ENCODE measurements at regions of chr21 and their contacts with region 1.

Region 1: DNA sequence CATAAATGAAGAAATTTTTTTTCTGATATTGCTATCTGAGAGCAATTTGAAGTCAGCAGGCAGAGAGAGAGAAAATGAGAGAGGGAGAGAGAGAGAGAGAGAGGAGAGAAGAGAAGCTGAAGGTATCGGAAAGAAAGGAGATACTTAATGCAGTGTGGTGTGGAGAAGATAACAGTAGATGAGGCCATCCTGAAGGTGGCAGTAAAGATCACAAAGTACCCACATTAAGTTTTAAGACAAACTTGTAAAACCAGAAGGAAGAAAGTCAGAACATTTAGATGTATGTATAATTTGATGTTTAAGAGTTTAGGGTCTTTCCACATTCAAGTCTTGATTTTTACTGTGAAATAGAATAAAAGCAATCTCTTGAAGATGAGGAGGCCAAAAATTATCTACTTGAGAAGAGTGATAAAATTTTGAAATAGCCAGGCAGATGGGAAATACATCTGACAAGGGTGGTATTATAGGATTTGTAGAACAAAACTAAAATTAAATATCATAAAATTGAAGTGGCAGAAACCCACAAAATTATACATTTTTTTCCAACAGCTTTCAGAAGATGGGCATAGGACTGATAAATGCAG is 1753.4 kb downstream of the MRPL39 start:
- DNase-seq: peak in 3 of 9 experiments; percentile 6 to 70 (median 56)
- ATAC-seq: peak; percentile 71
- H3K4me3 ChIP-seq: no peak overlapping the region
- H3K4me3 Mint-ChIP-seq: no peak overlapping the region
- H3K27ac ChIP-seq: no peak overlapping the region
- H3K27ac Mint-ChIP-seq: no peak overlapping the region
- H3K4me1 ChIP-seq: peaks cover 3% of the 10 kb centered on the region
- H3K4me1 Mint-ChIP-seq: peaks cover 11% of the 10 kb centered on the region
- H3K27me3 ChIP-seq: no peaks in the 10 kb centered on the region
- H3K27me3 Mint-ChIP-seq: no peaks in the 10 kb centered on the region
- CTCF ChIP-seq: peak; percentile 69

Region 2: GRCh38 chr21:23968722-23969647 is 115.1 kb after region 1 on chr21:
- CTCF ChIA-PET with region 1: interaction called, 39 read pairs
- POLR2A ChIA-PET with region 1: no interaction called
- intact Hi-C with region 1: loop called (anchors 1 to 2 kb)
- DNase-seq: peak; percentile 38 to 92 (median 70)
- ATAC-seq: peak; percentile 89
- H3K4me3 ChIP-seq: peak overlapping the region in 1 of 2 experiments; percentile 1
- H3K4me3 Mint-ChIP-seq: peak overlapping the region; percentile 59
- H3K27ac ChIP-seq: peak overlapping the region; percentile 28 to 66
- H3K27ac Mint-ChIP-seq: peak overlapping the region; percentile 58
- H3K4me1 ChIP-seq: peaks cover 21% of the 10 kb centered on the region
- H3K4me1 Mint-ChIP-seq: peaks cover 20% of the 10 kb centered on the region
- H3K27me3 ChIP-seq: no peaks in the 10 kb centered on the region
- H3K27me3 Mint-ChIP-seq: no peaks in the 10 kb centered on the region
- CTCF ChIP-seq: peak; percentile 79

Region 3: DNA sequence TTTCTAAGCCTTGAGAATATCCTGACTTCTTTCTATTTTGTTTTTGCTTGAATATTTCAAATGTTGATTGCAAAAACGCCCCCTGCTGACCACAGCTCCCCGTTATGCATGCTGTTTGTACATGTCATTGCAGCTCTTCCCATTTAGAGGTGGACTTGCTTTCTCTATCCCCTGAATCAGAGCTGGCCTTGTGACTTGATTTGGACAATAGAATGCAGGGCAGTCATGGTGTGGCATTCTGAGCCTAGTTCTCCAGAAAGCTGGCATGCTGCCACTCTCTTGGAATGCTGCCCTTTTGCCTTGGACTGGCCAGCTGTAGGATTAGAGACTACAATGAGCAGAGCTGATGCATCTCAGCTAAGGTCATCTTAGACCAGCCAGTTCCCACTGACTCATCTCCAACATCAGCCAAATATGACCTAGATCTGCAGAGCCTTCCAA is 191.9 kb after region 1 on chr21:
- CTCF ChIA-PET with region 1: interaction called, 6 read pairs
- POLR2A ChIA-PET with region 1: no interaction called
- intact Hi-C with region 1: loop called in 1 of 2 experiments (anchors 10 kb)
- DNase-seq: peak in 5 of 9 experiments; percentile 11 to 49 (median 19)
- ATAC-seq: no peak
- H3K4me3 ChIP-seq: no peak overlapping the region
- H3K4me3 Mint-ChIP-seq: no peak overlapping the region
- H3K27ac ChIP-seq: no peak overlapping the region
- H3K27ac Mint-ChIP-seq: no peak overlapping the region
- H3K4me1 ChIP-seq: peaks cover 5% of the 10 kb centered on the region
- H3K4me1 Mint-ChIP-seq: peaks cover 17% of the 10 kb centered on the region
- H3K27me3 ChIP-seq: no peaks in the 10 kb centered on the region
- H3K27me3 Mint-ChIP-seq: no peaks in the 10 kb centered on the region
- CTCF ChIP-seq: no peak

Region 4: GRCh38 chr21:24076179-24076578 is 222.3 kb after region 1 on chr21:
- CTCF ChIA-PET with region 1: no interaction called
- POLR2A ChIA-PET with region 1: no interaction called
- intact Hi-C with region 1: loop called in 1 of 2 experiments (anchors 10 kb)
- DNase-seq: peak in 2 of 9 experiments; percentile 7 to 37
- ATAC-seq: no peak
- H3K4me3 ChIP-seq: no peak overlapping the region
- H3K4me3 Mint-ChIP-seq: no peak overlapping the region
- H3K27ac ChIP-seq: no peak overlapping the region
- H3K27ac Mint-ChIP-seq: no peak overlapping the region
- H3K4me1 ChIP-seq: no peaks in the 10 kb centered on the region
- H3K4me1 Mint-ChIP-seq: no peaks in the 10 kb centered on the region
- H3K27me3 ChIP-seq: no peaks in the 10 kb centered on the region
- H3K27me3 Mint-ChIP-seq: no peaks in the 10 kb centered on the region
- CTCF ChIP-seq: no peak

Region 5: DNA sequence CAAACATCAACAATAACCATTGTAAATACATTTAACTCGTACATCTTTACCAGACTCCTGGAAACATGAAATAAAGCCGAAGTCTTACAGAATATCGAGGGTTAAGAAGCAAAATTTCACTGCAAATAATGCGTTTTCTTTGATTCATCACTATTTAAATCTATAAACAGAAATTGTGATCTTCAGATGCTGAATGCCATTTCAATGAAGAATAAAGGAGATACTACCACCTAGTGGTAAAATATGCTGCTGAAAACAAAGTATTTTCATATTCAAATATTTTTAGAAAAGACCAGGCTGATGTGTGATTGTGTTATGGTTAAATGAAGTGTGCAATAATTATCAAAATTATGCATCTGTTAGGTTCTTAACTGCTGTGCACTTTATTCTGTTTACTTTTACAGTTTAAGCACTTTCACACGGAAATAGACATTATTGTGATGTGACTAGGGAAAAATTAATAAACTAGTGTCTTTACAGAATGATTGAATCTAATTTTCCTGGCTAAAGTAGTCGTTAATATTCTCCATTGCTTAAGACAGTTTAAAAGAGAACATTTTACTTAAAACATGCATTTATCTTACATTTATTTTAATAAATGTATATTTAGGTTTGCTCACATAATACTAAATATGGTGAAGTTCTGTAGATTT is 660.3 kb after region 1 on chr21:
- CTCF ChIA-PET with region 1: no interaction called
- POLR2A ChIA-PET with region 1: no interaction called
- intact Hi-C with region 1: loop called in 1 of 2 experiments (anchors 2 kb)
- DNase-seq: peak in 1 of 9 experiments; percentile 17
- ATAC-seq: no peak
- H3K4me3 ChIP-seq: no peak overlapping the region
- H3K4me3 Mint-ChIP-seq: no peak overlapping the region
- H3K27ac ChIP-seq: no peak overlapping the region
- H3K27ac Mint-ChIP-seq: no peak overlapping the region
- H3K4me1 ChIP-seq: no peaks in the 10 kb centered on the region
- H3K4me1 Mint-ChIP-seq: no peaks in the 10 kb centered on the region
- H3K27me3 ChIP-seq: no peaks in the 10 kb centered on the region
- H3K27me3 Mint-ChIP-seq: peaks cover 3% of the 10 kb centered on the region
- CTCF ChIP-seq: peak; percentile 61

Region 6: DNA sequence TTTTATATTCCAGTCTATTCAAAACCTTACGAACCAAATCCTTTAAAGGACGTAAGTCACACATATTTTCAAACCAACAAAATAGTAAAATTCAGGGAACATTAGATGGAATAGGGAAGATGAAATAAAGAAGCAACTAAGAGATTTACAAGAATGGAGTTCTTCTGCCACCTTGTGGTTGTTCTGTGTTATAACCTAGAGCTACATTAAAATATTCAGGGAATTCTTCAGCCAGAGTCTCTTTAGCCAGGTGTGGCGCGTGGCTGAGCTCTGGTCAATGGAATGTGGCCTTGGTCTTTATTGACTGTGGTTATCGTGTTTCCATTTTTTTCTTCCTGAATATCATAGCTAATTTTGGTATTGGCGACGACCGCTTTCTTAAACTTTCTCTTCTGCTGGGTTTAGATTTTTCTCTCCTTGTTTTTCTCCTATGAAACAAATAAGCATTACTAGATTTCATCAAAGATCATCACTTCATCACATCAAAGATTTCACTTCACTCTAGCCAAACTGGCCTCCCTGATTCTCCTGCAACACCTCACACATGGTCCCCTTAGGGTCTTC is 1532.1 kb after region 1 on chr21:
- CTCF ChIA-PET with region 1: interaction called, 7 read pairs
- POLR2A ChIA-PET with region 1: no interaction called
- intact Hi-C with region 1: loop called in 1 of 2 experiments (anchors 2 kb)
- DNase-seq: peak in 2 of 9 experiments; percentile 52 to 64
- ATAC-seq: no peak
- H3K4me3 ChIP-seq: no peak overlapping the region
- H3K4me3 Mint-ChIP-seq: no peak overlapping the region
- H3K27ac ChIP-seq: no peak overlapping the region
- H3K27ac Mint-ChIP-seq: no peak overlapping the region
- H3K4me1 ChIP-seq: no peaks in the 10 kb centered on the region
- H3K4me1 Mint-ChIP-seq: peaks cover 4% of the 10 kb centered on the region
- H3K27me3 ChIP-seq: no peaks in the 10 kb centered on the region
- H3K27me3 Mint-ChIP-seq: no peaks in the 10 kb centered on the region
- CTCF ChIP-seq: peak; percentile 96

Measured in CD8-positive, alpha-beta T cell (primary cell).